CD8-positive, alpha-beta T cell (primary cell): ENCODE measurements at regions of chr9 and their contacts with region 1.

Region 1: GRCh38 chr9:108953983-108954574 is 19.9 kb downstream of the ABITRAM start:
- DNase-seq: peak in 2 of 9 experiments; percentile 52 to 64
- ATAC-seq: no peak
- H3K4me3 ChIP-seq: no peak overlapping the region
- H3K4me3 Mint-ChIP-seq: no peak overlapping the region
- H3K27ac ChIP-seq: no peak overlapping the region
- H3K27ac Mint-ChIP-seq: no peak overlapping the region
- H3K4me1 ChIP-seq: no peaks in the 10 kb centered on the region
- H3K4me1 Mint-ChIP-seq: no peaks in the 10 kb centered on the region
- H3K27me3 ChIP-seq: no peaks in the 10 kb centered on the region
- H3K27me3 Mint-ChIP-seq: no peaks in the 10 kb centered on the region
- CTCF ChIP-seq: peak; percentile 79

Region 2: DNA sequence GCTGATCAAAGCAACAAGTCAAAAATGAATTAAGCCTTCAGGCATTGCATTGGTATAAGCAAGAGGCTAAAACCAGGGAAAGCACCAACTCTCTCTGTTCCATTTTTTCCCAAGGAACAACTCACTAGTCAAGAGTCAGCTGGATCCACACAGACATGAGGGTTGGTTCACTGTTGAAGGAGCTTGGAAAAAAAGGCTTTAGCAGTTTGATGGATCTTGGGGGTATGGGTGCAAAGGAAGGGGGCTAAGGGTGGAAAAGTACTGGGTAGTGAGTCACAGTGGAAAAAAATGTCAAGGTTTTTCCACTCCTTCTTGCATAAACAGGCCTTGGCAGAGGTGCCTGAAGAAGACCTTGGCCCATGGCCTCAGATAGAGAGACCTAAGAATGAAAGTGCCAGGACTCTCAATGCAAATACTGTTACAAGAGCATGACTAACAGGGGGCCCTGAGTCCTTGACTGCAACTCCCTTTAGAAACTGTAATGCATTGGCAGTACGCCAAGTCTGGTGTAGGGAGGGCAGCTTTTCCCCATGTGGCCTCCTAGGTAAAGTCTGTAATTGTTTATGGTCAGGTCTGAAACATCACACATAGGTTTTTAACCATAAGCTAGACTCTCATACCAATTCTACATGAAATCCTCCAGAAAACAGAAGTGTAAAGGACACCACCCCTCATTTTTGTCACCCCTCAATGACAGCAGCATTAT is 68.3 kb before region 1 on chr9:
- CTCF ChIA-PET with region 1: interaction called, 7 read pairs
- POLR2A ChIA-PET with region 1: no interaction called
- intact Hi-C with region 1: loop called in 1 of 2 experiments (anchors 5 kb)
- DNase-seq: peak in 2 of 9 experiments; percentile 7 to 10
- ATAC-seq: no peak
- H3K4me3 ChIP-seq: no peak overlapping the region
- H3K4me3 Mint-ChIP-seq: no peak overlapping the region
- H3K27ac ChIP-seq: no peak overlapping the region
- H3K27ac Mint-ChIP-seq: peak overlapping the region; percentile 33
- H3K4me1 ChIP-seq: no peaks in the 10 kb centered on the region
- H3K4me1 Mint-ChIP-seq: peaks cover 5% of the 10 kb centered on the region
- H3K27me3 ChIP-seq: no peaks in the 10 kb centered on the region
- H3K27me3 Mint-ChIP-seq: no peaks in the 10 kb centered on the region
- CTCF ChIP-seq: no peak

Region 3: GRCh38 chr9:108913391-108913790 is 40.7 kb before region 1 on chr9:
- CTCF ChIA-PET with region 1: interaction called, 3 read pairs
- POLR2A ChIA-PET with region 1: no interaction called
- intact Hi-C with region 1: loop called in 1 of 2 experiments (anchors 5 kb)
- DNase-seq: no peak
- ATAC-seq: no peak
- H3K4me3 ChIP-seq: no peak overlapping the region
- H3K4me3 Mint-ChIP-seq: no peak overlapping the region
- H3K27ac ChIP-seq: no peak overlapping the region
- H3K27ac Mint-ChIP-seq: no peak overlapping the region
- H3K4me1 ChIP-seq: peaks cover 14% of the 10 kb centered on the region
- H3K4me1 Mint-ChIP-seq: peaks cover 27% of the 10 kb centered on the region
- H3K27me3 ChIP-seq: no peaks in the 10 kb centered on the region
- H3K27me3 Mint-ChIP-seq: no peaks in the 10 kb centered on the region
- CTCF ChIP-seq: no peak